ENCODE measurements at regions of chr9 and their contacts with region 1.

Region 1: GRCh38 chr9:77751341-77752091 is 103.4 kb upstream of the GNA14 start:
- DNase-seq: no peak

Region 2: GRCh38 chr9:77435688-77436087 is 315.8 kb before region 1 on chr9:
- intact Hi-C with region 1: loop called in 1 of 2 experiments (anchors 5 kb)
- DNase-seq: no peak

Region 3: GRCh38 chr9:78035383-78035993 is 284.0 kb after region 1 on chr9:
- intact Hi-C with region 1: loop called in 1 of 2 experiments (anchors 10 kb)
- DNase-seq: no peak

Measured in posterior vena cava (tissue), 2 donors.